Activated T-helper 2 cell treated with anti-CD3 and anti-CD28 coated beads, Interferon-gamma antibody, Interleukin-2, Interleukin-4, amounts not matched to agents 10 μg/mL and 5 μg/mL and 100 μg/mL, durations not matched to agents 14 hours and 24 hours and 36 hours (primary cell): ENCODE measurements at regions of chr10 and their contacts with region 1.

Region 1: DNA sequence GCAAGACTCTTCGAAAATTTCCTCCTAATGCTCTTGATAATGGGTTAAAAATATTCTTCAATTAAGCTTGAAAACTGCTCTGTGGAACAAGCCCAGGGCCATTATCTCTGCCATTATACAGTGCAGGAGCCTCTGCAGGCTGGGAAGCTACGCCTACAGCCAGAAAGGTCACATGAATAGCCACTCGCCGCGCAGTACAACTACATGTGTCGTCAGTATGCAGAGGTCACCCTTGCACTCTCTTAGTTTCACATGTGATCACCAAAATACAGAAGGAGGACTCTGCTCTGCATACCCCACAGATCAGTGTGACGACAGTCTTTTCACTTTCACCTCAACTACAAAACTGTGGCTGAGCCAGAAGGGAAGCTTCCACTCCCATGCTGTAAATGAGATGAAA is 141.8 kb upstream of the C1QL3 start:
- DNase-seq: no peak
- H3K4me3 Mint-ChIP-seq: no peak overlapping the region
- H3K27ac Mint-ChIP-seq: no peak overlapping the region
- H3K4me1 Mint-ChIP-seq: peaks cover 14% of the 10 kb centered on the region
- H3K27me3 Mint-ChIP-seq: no peaks in the 10 kb centered on the region

Region 2: GRCh38 chr10:16632996-16633395 is 30.4 kb before region 1 on chr10:
- intact Hi-C with region 1: no loop called
- DNase-seq: no peak
- H3K4me3 Mint-ChIP-seq: no peak overlapping the region
- H3K27ac Mint-ChIP-seq: no peak overlapping the region
- H3K4me1 Mint-ChIP-seq: no peaks in the 10 kb centered on the region
- H3K27me3 Mint-ChIP-seq: no peaks in the 10 kb centered on the region

Region 3: DNA sequence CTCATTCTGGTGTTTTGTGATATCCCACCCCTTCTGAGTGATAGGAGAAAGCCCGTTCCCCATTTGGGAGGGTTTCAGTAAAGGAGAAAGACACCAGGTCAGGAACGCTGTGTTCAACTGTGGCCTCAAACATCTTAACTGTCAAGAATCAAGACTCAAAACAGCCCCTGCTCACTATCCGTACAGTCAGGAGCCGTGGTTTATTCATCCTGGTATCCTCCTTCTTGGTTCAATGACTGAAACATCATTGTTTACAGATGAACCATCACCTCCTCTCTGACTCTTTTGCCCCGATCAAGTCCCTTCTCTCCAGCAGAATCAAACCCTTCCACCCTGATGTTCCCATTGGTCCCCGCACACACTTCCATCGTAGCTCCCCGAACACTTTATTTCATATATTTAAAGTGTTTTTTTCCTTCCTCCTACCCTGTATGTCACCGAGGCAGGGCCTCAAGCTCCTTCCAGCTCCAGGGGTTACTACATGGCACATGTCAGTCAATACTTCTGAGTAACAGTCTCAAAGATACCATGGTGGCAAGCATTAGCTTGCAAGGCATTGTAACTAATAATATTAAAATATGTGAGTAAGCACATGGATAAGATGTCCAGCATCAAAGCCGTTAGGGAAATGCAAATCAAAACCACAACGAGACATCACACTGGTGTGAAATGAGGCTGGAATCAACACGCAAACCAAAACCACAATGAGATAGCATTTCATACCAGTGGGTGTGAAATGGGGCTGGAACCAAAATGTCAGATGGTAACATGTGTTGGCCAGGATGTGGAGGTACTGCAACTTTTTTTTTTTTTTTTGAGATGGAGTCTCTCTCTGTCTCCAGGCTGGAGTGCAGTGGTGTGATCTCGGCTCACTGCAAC is 17.0 kb before region 1 on chr10:
- intact Hi-C with region 1: loop called (anchors 1 kb)
- DNase-seq: no peak
- H3K4me3 Mint-ChIP-seq: no peak overlapping the region
- H3K27ac Mint-ChIP-seq: peak overlapping the region; percentile 48
- H3K4me1 Mint-ChIP-seq: peaks cover 20% of the 10 kb centered on the region
- H3K27me3 Mint-ChIP-seq: no peaks in the 10 kb centered on the region

Region 4: GRCh38 chr10:16950656-16951601 is 287.5 kb after region 1 on chr10:
- intact Hi-C with region 1: no loop called
- DNase-seq: no peak
- H3K4me3 Mint-ChIP-seq: no peak overlapping the region
- H3K27ac Mint-ChIP-seq: no peak overlapping the region
- H3K4me1 Mint-ChIP-seq: peaks cover 4% of the 10 kb centered on the region
- H3K27me3 Mint-ChIP-seq: peaks cover 28% of the 10 kb centered on the region